PC-9 (cell line): ENCODE measurements at regions of chr22 and their contacts with region 1.

Region 1: DNA sequence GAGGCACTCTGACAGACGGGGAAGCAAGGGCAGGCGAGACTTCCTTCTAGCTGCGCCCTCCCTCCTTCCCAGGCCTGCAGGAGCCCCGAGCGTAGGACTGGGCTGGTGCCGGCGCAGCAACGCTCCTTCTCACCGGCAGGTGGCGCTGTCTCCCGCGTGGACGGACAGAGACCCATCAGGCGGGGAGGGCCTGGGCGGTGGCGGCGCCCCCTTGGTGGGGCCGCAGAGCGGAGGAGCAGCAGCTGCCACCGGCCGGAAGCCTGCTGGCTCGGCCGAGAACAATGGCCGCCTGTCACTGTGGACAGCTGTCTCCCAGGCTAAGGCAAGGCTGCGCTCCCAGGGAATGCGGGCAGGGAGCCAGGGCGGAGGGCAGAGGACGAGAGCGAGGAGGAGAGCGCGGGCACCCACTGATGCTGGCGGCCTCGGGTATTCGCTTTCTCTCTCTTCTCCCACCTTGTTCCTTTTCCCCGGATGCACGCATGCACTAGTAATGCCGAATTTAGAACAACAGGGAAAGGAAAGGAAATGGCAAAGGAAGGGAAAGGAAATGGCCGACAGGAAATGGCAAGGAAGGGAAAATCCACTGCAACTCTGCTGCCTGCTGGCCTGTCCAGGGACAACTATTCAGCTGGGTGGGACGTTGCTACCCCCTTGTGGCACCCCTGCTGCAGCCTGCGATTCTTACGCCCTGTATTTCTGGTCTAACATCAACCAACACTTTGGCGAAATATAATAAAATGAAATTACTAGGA is 14.4 kb downstream of the PPM1F start:
- DNase-seq: peak in 1 of 2 experiments; percentile 88
- H3K4me3 ChIP-seq: no peak overlapping the region
- H3K27ac ChIP-seq: no peak overlapping the region
- H3K4me1 ChIP-seq: peaks cover 13% of the 10 kb centered on the region
- H3K27me3 ChIP-seq: no peaks in the 10 kb centered on the region
- CTCF ChIP-seq: peak; percentile 94

Region 2: DNA sequence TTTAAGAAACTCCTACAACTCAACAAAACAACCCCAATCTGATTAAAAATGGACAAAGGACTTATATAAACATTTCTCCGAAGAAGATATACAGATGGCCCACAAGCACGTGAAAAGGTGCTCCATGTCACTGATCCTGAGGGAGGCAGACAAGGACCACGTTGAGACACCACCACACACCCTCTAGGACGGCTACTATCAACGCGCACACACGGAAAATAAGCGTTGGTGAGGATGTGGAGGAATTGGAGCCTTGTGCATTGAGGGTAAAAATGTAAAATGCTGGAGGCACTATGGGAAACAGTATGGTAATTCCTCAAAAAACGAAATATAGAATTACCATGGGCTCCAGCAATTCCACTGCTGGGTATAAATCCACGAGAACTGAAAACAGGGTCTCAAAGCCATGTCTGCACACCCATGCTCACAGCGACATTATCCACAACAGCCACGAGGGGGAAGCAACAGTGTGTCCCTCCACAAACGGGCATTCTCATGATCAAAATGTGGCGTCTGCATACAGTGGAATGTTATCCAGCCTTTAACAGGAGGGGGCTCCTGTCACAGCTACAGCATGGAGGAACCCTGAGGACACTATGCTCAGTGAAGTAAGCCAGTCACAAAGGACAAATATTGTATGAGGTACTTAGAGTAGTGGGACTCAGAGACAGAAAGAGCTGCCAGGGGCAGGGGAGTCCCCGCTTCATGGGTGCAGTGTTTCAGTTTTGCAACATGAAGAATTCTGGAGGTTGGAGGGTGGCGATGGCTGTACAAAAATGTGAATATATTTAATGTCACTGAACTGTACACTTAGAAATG is 225.1 kb before region 1 on chr22:
- CTCF ChIA-PET with region 1: no interaction called
- POLR2A ChIA-PET with region 1: no interaction called
- intact Hi-C with region 1: loop called (anchors 5 kb)
- DNase-seq: peak in 1 of 2 experiments; percentile 37
- H3K4me3 ChIP-seq: no peak overlapping the region
- H3K27ac ChIP-seq: no peak overlapping the region
- H3K4me1 ChIP-seq: no peaks in the 10 kb centered on the region
- H3K27me3 ChIP-seq: no peaks in the 10 kb centered on the region
- CTCF ChIP-seq: peak; percentile 67

Region 3: DNA sequence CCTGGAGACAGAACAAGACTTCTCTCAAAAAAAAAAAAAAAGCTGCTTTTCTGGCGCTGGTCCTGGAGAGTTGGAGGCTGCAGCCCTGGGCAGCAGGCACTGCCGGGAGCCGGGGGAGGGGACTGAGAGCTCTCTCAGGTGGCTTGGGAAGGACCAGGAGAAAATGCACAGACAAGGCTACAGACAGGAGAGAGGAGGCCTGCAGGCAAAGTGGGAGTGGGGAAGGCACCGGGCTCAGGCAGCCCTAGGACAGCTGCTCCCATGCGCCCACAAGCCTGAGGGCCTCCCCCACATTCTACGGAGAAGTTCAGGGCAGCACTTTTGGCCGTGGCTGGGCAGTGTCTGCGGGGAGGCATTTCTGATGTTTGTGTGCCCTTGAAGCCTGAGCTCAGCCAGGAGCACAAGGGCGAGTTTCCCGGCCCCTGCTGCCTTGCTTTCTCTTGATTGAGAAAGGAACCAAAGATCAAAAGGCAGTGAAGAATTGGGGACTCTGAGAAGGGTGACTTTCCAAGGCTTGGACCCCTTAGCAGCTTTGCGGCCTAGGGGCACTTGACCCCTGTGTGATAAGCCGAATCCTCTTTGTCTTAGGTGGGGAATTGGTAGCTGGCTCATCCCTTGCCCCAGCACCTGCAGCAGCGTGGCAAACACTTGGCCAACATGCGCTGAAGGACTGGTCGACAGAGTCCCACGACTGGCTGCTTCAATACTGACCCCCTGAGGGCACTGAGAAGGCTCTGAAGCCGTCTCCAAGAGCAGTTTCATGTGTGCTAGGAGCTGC is 20.9 kb before region 1 on chr22:
- CTCF ChIA-PET with region 1: no interaction called
- POLR2A ChIA-PET with region 1: interaction called, 10 read pairs
- intact Hi-C with region 1: no loop called
- DNase-seq: no peak
- H3K4me3 ChIP-seq: no peak overlapping the region
- H3K27ac ChIP-seq: no peak overlapping the region
- H3K4me1 ChIP-seq: no peaks in the 10 kb centered on the region
- H3K27me3 ChIP-seq: no peaks in the 10 kb centered on the region
- CTCF ChIP-seq: no peak

Region 4: DNA sequence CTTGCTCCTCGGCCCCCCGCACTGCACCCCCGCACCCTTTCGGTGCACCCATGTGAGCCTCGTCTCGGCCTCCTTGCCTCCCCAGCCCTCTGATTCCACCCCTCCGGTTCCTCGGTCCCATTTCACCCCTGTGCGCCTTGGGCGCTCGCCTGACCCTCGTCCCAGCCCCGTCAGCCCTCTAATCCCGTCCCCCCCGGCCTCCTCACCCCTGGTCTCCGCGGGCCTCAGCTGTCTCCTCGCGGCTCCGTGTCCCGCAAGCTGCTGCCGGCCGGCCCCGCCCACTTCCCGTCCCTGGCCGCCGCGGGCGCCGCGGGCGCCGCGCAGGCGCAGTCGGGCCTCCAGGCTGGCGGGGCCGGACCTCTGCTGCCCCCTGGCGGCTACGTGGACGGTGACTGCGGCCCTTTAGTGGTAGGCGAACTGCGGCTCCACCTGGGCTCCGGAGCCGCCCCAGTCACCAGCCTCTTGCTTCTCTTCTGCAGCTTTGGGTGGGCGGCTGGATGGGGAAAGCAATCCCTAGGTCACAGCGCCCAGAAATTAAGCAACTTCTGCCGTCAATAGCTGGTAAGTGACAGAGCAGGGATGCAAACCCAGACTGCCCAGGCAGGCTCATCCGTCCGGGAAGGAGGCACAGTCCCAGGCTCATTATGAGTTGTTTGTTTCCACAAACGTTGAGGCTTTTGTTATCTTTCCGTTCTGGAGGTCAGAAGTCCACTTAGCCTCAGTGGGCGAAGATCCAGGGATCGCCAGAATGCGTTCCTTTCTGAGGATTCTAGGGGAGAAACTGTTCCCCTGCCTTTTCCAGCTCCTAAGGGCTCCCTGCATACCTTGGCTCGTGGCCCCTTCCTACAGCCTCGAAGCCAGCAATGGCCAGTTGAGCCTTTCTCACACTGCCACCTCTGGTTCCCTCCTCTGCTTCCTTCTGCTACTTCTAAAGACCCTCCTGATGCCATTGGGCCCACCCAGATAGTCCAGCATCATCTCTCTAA is 14.6 kb after region 1 on chr22 and contains the start of gene PPM1F:
- CTCF ChIA-PET with region 1: interaction called, 3 read pairs
- POLR2A ChIA-PET with region 1: no interaction called
- intact Hi-C with region 1: loop called (anchors 2 kb)
- DNase-seq: peak in 1 of 2 experiments; percentile 83
- H3K4me3 ChIP-seq: peak within 1 kb of the TSS; percentile 60
- H3K27ac ChIP-seq: no peak within 1 kb of the TSS
- H3K4me1 ChIP-seq: peaks cover 5% of the 10 kb centered on the region
- H3K27me3 ChIP-seq: no peaks in the 10 kb centered on the region
- CTCF ChIP-seq: peak; percentile 64
- total RNA-seq, gene PPM1F: 20.6 and 22.1 TPM in 2 replicates

Region 5: DNA sequence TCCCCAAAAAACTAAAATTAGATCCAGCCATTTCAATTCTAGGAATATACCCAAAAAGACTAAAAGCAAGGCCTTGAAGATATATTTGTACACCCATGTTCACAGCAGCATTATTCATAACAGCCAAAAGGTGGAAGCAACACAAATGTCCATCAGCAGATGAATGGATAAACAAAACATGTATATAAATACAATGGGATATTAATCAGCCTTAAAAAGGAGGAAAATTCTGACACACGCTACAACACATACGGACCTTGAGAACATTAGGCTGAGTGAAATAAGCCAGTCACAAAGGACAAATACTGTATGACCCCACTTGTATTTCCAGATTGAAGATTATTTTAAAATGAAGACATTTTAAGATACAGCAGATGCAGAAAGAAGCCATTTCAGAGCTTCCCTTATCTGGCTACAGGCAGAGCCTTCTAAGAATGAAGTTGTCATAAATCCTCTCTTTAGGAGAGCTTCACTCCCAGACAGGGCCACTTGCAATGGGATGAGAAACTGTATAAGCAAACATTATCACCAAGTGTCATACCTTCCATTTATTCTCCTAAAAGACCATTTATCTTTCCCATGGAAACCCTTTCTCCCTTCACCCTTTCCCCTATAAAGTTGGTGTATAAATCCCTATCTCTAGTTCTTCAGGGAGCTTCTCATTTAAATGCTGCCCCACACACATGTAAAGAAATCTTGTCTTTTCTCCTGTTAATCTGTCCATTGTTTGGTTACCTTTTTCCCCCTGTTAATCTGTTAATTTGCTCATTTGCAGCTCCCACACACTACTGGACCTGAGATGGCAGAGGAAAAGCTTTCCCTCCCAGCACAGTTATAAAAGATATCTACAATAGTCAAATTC is 63.6 kb after region 1 on chr22:
- CTCF ChIA-PET with region 1: no interaction called
- POLR2A ChIA-PET with region 1: no interaction called
- intact Hi-C with region 1: no loop called
- DNase-seq: no peak
- H3K4me3 ChIP-seq: no peak overlapping the region
- H3K27ac ChIP-seq: no peak overlapping the region
- H3K4me1 ChIP-seq: no peaks in the 10 kb centered on the region
- H3K27me3 ChIP-seq: peaks cover 32% of the 10 kb centered on the region; the same call in 1 of the 2 replicates
- CTCF ChIP-seq: no peak